Caco-2 (cell line): ENCODE measurements at regions of chr15 and their contacts with region 1.

Region 1: DNA sequence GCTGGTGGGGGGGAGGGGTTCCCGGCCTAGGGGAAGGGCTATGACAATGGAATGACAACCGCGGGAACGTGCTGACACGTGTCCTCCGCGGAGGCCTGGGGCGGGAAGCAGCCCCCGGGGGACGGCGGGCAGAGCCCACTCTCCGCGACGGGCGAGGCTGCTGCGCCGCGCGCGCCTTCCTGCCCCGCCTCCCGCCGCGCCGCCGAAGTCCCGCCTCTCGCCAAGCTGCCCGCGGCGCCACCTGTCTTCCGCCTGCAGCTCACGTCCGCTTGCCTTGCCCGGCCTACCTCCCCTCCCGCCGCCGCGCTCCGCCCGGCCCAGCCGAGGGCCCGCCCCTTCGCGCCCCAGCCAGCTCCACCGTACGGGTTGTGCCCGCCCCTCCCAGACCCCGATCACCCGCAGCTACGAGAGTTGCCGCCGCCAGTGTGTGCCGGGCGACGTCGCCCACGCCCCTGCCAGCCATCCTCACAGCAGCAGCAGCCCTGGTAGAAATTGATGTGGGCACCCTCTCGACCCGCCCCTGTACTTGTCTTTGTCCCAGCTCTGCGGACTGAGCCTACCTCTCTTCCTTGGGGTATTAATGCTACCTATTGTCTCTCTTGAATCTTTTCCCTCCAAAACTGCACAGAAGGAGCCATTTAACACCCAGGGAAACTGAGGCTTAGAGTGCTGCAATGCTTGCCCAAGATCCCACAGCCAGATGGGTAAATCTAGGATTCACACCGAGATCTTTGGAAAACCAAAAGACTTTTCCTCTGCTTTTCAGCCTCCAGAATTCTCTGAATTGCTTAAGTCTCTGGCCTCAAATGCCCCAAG is at the start of gene PARP16:
- DNase-seq: peak; percentile 92 to 93
- H3K4me3 ChIP-seq: peak within 1 kb of the TSS; percentile 61
- H3K4me3 Mint-ChIP-seq: peak within 1 kb of the TSS; percentile 86
- H3K27ac Mint-ChIP-seq: peak within 1 kb of the TSS; percentile 70
- H3K4me1 ChIP-seq: peaks cover 32% of the 10 kb centered on the region
- H3K4me1 Mint-ChIP-seq: peaks cover 31% of the 10 kb centered on the region
- H3K27me3 ChIP-seq: no peaks in the 10 kb centered on the region
- H3K27me3 Mint-ChIP-seq: no peaks in the 10 kb centered on the region
- CTCF ChIP-seq: peak in 1 of 2 experiments; percentile 31
- total RNA-seq, gene PARP16: 6.9 and 9.5 TPM in 2 replicates

Region 2: GRCh38 chr15:64803526-64803925 is 483.4 kb before region 1 on chr15:
- CTCF ChIA-PET with region 1: no interaction called
- POLR2A ChIA-PET with region 1: interaction called, 10 read pairs
- intact Hi-C with region 1: no loop called
- DNase-seq: no peak
- H3K4me3 ChIP-seq: no peak overlapping the region
- H3K4me3 Mint-ChIP-seq: no peak overlapping the region
- H3K27ac Mint-ChIP-seq: no peak overlapping the region
- H3K4me1 ChIP-seq: no peaks in the 10 kb centered on the region
- H3K4me1 Mint-ChIP-seq: no peaks in the 10 kb centered on the region
- H3K27me3 ChIP-seq: no peaks in the 10 kb centered on the region
- H3K27me3 Mint-ChIP-seq: no peaks in the 10 kb centered on the region
- CTCF ChIP-seq: no peak

Region 3: DNA sequence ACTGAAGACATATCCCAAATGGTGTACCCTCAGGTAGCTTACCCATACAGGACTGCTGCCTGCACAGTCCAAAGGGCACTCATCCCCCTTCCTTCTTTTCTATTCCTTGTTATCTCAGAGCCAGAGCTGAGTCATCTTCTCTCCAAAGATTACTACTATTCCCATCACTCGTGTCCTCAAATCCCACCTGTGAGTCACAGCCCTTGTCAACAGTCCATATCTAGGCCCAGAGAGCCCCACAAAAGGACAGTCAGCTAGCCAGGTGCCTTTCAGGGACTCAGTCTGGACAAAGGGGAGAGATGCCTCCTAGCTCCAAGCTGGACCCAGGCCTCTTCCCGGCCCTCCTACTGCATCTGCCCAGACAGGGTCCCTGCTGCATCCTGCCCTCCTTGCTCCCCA is 11.2 kb before region 1 on chr15:
- CTCF ChIA-PET with region 1: interaction called, 17 read pairs
- POLR2A ChIA-PET with region 1: interaction called, 10 read pairs
- intact Hi-C with region 1: loop called (anchors 1 kb)
- DNase-seq: peak; percentile 65 to 80
- H3K4me3 ChIP-seq: no peak overlapping the region
- H3K4me3 Mint-ChIP-seq: peak overlapping the region; percentile 3
- H3K27ac Mint-ChIP-seq: peak overlapping the region; percentile 88
- H3K4me1 ChIP-seq: peaks cover 48% of the 10 kb centered on the region
- H3K4me1 Mint-ChIP-seq: peaks cover 42% of the 10 kb centered on the region
- H3K27me3 ChIP-seq: no peaks in the 10 kb centered on the region
- H3K27me3 Mint-ChIP-seq: no peaks in the 10 kb centered on the region
- CTCF ChIP-seq: no peak

Region 4: DNA sequence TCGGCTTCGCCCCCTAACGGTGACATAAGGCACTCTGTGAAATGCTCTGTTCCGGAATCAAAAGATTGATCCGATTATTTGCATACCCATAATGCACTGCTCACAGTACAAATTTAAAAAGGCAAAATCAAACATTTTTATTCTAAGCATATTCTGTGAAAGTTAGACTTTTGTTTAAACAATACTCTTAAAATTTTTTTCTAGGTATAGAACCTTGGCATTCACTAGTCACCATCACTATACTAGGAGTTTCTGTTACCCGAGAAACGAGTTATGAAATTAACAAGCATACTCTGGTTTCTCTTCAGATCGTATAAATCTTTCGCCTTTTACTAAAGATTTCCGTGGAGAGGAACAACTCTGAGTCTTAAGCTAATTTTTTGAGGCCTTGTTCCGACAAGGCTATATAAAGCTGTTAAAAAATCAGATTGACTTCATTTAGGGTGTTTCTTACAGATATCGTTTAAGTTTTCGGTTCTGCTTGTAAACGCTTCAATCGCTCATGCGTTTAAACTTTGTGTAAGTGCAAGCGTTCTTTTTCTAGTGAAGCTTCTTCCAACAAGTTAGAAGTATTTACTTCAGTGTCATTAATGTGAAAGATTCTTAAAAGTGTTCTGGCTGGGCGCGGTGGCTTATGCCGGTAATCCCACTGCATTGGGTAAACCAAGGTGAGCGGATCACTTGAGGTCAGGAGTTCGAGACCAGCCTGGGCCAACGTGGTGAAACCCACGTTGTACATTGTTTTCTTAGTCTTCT is 17.7 kb after region 1 on chr15 and contains the start of gene RNU5B-1:
- CTCF ChIA-PET with region 1: interaction called, 4 read pairs
- POLR2A ChIA-PET with region 1: interaction called, 14 read pairs
- intact Hi-C with region 1: no loop called
- DNase-seq: peak; percentile 86 to 89
- H3K4me3 ChIP-seq: peak within 1 kb of the TSS; percentile 41
- H3K4me3 Mint-ChIP-seq: peak within 1 kb of the TSS; percentile 90
- H3K27ac Mint-ChIP-seq: peak within 1 kb of the TSS; percentile 95
- H3K4me1 ChIP-seq: peaks cover 6% of the 10 kb centered on the region; the same call in 1 of the 2 replicates
- H3K4me1 Mint-ChIP-seq: no peaks in the 10 kb centered on the region
- H3K27me3 ChIP-seq: no peaks in the 10 kb centered on the region
- H3K27me3 Mint-ChIP-seq: no peaks in the 10 kb centered on the region
- CTCF ChIP-seq: peak in 1 of 2 experiments; percentile 77
- total RNA-seq, gene RNU5B-1: not detected in 2 replicates

Region 5: DNA sequence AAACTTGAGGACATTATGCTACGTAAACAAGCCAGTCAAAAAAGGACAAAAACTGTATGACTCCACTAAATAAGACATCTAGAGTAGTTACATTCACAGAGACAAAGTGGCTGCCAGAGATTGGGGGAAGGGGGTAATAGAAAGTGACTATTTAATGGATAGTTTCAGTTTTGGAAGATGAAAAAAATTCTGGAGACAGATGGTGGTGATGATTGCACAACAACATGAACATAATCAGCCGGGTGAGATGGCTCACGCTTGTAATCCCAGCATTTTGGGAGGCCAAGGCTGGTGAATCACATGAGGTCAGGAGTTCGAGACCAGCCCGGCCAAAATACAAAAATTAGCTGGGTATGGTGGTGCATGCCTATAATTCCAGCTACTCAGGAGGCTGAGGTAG is 190.0 kb after region 1 on chr15:
- CTCF ChIA-PET with region 1: no interaction called
- POLR2A ChIA-PET with region 1: no interaction called
- intact Hi-C with region 1: no loop called
- DNase-seq: no peak
- H3K4me3 ChIP-seq: no peak overlapping the region
- H3K4me3 Mint-ChIP-seq: no peak overlapping the region
- H3K27ac Mint-ChIP-seq: no peak overlapping the region
- H3K4me1 ChIP-seq: no peaks in the 10 kb centered on the region
- H3K4me1 Mint-ChIP-seq: no peaks in the 10 kb centered on the region
- H3K27me3 ChIP-seq: no peaks in the 10 kb centered on the region
- H3K27me3 Mint-ChIP-seq: no peaks in the 10 kb centered on the region
- CTCF ChIP-seq: no peak